ENCODE measurements at regions of chr7 and their contacts with region 1.

Region 1: DNA sequence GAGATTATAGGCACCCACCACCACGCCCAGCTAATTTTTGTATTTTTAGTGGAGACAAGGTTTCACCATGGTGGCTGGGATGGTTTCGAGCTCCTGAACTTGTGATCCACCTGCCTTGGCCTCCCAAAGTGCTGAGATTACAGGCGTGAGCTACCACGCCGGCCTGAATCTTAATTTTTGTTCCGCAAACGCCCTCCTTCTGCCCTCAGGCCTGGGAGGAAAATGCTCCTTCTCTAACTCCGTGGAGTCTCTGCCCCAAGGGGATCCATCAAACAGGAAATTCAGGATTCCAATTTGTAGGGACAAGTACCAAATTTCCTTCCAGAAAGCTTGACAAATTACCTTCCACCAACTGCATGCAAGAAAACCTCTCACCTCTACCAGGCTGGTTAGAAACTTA is 43.2 kb downstream of the RBAK start:
- DNase-seq: no peak
- H3K4me3 ChIP-seq: no peak overlapping the region
- H3K27ac ChIP-seq: no peak overlapping the region
- H3K4me1 ChIP-seq: no peaks in the 10 kb centered on the region
- H3K27me3 ChIP-seq: 0 out of 7 replicates have a peak, but pooled peaks cover 0 to 3% (median 1%) of the 10 kb centered on the region in 4 experiments
- CTCF ChIP-seq: no peak
- EP300 ChIP-seq: no peak
- POLR2A ChIP-seq: no peak
- RAD21 ChIP-seq: no peak

Region 2: GRCh38 chr7:4856336-4857057 is 232.4 kb before region 1 on chr7:
- CTCF ChIA-PET with region 1: no interaction called
- POLR2A ChIA-PET with region 1: no interaction called
- DNase-seq: no peak
- H3K4me3 ChIP-seq: no peak overlapping the region
- H3K27ac ChIP-seq: no peak overlapping the region
- H3K4me1 ChIP-seq: no peaks in the 10 kb centered on the region
- H3K27me3 ChIP-seq: no peaks in the 10 kb centered on the region; a peak in 1 of 7 replicates
- CTCF ChIP-seq: no peak
- EP300 ChIP-seq: no peak
- POLR2A ChIP-seq: no peak
- RAD21 ChIP-seq: no peak

Region 3: GRCh38 chr7:4916115-4916514 is 172.8 kb before region 1 on chr7:
- CTCF ChIA-PET with region 1: interaction called, 10 read pairs
- POLR2A ChIA-PET with region 1: no interaction called
- DNase-seq: no peak
- H3K4me3 ChIP-seq: no peak overlapping the region
- H3K27ac ChIP-seq: no peak overlapping the region
- H3K4me1 ChIP-seq: no peaks in the 10 kb centered on the region
- H3K27me3 ChIP-seq: no peaks in the 10 kb centered on the region
- CTCF ChIP-seq: peak in 1 of 3 experiments; percentile 19; a peak in 1 of 4 replicates
- EP300 ChIP-seq: no peak
- POLR2A ChIP-seq: no peak
- RAD21 ChIP-seq: no peak

Region 4: GRCh38 chr7:4996696-4997222 is 92.1 kb before region 1 on chr7:
- CTCF ChIA-PET with region 1: interaction called, 14 read pairs
- POLR2A ChIA-PET with region 1: no interaction called
- DNase-seq: no peak
- H3K4me3 ChIP-seq: no peak overlapping the region
- H3K27ac ChIP-seq: no peak overlapping the region
- H3K4me1 ChIP-seq: no peaks in the 10 kb centered on the region
- H3K27me3 ChIP-seq: no peaks in the 10 kb centered on the region
- CTCF ChIP-seq: peak; percentile 20 to 38 (median 38)
- EP300 ChIP-seq: no peak
- POLR2A ChIP-seq: no peak
- RAD21 ChIP-seq: no peak; a peak in 1 of 4 replicates

Region 5: DNA sequence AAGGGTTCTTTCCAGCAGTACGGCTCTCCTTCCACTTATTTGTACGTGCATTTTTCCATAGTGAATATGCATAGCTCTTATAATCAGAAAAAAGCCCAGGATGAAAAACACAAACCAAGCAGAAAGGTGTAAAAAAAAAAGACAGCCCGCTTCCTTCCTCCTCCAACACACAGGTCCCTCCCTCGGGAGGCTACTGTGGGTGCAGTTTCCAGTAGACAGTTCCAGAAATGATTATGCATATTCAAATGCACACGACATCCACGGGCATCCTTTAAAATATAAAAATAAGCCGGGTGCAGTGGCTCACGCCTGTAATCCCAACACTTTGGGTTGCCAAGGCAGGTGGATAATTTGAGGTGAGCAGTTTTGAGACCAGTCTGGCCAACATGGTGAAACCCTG is 274.8 kb after region 1 on chr7:
- CTCF ChIA-PET with region 1: no interaction called
- POLR2A ChIA-PET with region 1: no interaction called
- DNase-seq: no peak
- H3K4me3 ChIP-seq: no peak overlapping the region
- H3K27ac ChIP-seq: no peak overlapping the region
- H3K4me1 ChIP-seq: no peaks in the 10 kb centered on the region; a peak in 4 of 7 replicates
- H3K27me3 ChIP-seq: no peaks in the 10 kb centered on the region
- CTCF ChIP-seq: no peak
- EP300 ChIP-seq: no peak
- POLR2A ChIP-seq: no peak
- RAD21 ChIP-seq: no peak

Region 6: GRCh38 chr7:5532520-5533335 is 443.8 kb after region 1 on chr7:
- CTCF ChIA-PET with region 1: no interaction called
- POLR2A ChIA-PET with region 1: no interaction called
- DNase-seq: peak in 1 of 2 experiments; percentile 69
- H3K4me3 ChIP-seq: peak overlapping the region; percentile 0 to 47 (median 19); a peak in 5 of 8 replicates
- H3K27ac ChIP-seq: peak overlapping the region; percentile 99; the same call in 1 of the 2 replicates
- H3K4me1 ChIP-seq: peaks cover 2 to 36% (median 28%) of the 10 kb centered on the region in 4 experiments
- H3K27me3 ChIP-seq: no peaks in the 10 kb centered on the region
- CTCF ChIP-seq: no peak
- EP300 ChIP-seq: no peak
- POLR2A ChIP-seq: peak in 1 of 2 experiments; percentile 76; a peak in 2 of 3 replicates
- RAD21 ChIP-seq: no peak

Measured in H1 (cell line).